ENCODE measurements at regions of chr1 and their contacts with region 1.

Region 1: GRCh38 chr1:156860113-156860627 is 495 bp upstream of the NTRK1 start:
- DNase-seq: peak; percentile 87
- H3K4me3 ChIP-seq: peak overlapping the region; percentile 54 to 64
- H3K27ac ChIP-seq: peak overlapping the region in 1 of 2 experiments; percentile 97; a peak in 2 of 4 replicates
- H3K4me1 ChIP-seq: peaks cover 3 to 74% of the 10 kb centered on the region in 2 experiments; a peak in 2 of 4 replicates
- H3K27me3 ChIP-seq: peaks cover 39% of the 10 kb centered on the region
- CTCF ChIP-seq: peak; percentile 85
- EP300 ChIP-seq: no peak
- RAD21 ChIP-seq: peak; percentile 86

Region 2: GRCh38 chr1:156728597-156729462 is 131.3 kb before region 1 on chr1 and contains the start of gene ISG20L2:
- CTCF ChIA-PET with region 1: interaction called, 104 read pairs
- POLR2A ChIA-PET with region 1: interaction called, 7 read pairs
- DNase-seq: peak; percentile 92
- H3K4me3 ChIP-seq: peak within 1 kb of the TSS; percentile 76 to 87
- H3K27ac ChIP-seq: peak within 1 kb of the TSS; percentile 83 to 88
- H3K4me1 ChIP-seq: peaks cover 28 to 56% of the 10 kb centered on the region in 2 experiments
- H3K27me3 ChIP-seq: no peaks in the 10 kb centered on the region
- CTCF ChIP-seq: no peak
- EP300 ChIP-seq: no peak
- RAD21 ChIP-seq: no peak
- polyA plus RNA-seq, gene ISG20L2: 31.6 and 44.3 TPM in 2 replicates

Region 3: DNA sequence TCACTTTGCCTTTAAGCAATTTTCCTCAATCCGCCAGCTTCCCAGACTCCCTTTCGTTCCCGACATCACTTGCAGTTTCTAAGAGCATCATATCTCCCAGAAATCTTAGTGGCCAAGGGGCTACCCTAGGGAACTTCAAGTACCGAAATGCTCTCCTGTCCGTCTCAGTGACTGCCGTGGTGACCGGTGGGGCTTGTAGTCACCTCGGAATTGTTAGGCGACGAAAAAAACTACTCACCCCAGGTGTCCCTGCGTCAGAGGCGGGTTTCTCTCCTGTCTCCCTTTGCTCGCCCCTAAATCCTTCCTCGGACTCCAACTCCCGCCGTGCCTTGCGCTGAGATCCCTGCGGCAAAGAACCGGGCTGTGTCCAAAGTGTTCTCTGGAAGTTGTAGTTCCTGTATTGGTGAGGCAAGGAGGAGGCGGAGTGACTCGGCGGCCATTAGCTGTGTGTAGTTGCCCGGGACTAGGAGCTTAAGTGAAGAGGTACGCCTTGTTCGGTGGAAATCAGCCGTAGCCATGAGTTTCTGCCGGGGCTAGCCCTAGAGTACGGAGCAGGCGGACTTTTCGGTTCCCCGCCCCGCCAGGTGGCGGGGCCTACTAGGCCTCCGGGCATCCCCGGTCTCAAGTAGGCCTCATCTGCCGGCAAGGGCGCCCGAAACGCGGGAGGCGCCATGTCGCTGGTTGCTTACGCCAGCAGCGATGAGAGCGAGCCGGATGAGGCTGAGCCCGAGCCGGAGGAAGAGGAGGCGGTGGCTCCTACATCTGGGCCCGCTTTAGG is 92.9 kb before region 1 on chr1 and contains the start of gene PRCC:
- CTCF ChIA-PET with region 1: interaction called, 64 read pairs
- POLR2A ChIA-PET with region 1: interaction called, 8 read pairs
- DNase-seq: peak; percentile 87
- H3K4me3 ChIP-seq: peak within 1 kb of the TSS; percentile 72 to 86
- H3K27ac ChIP-seq: peak within 1 kb of the TSS; percentile 77 to 90
- H3K4me1 ChIP-seq: peaks cover 23 to 26% of the 10 kb centered on the region in 2 experiments; a peak in 3 of 4 replicates
- H3K27me3 ChIP-seq: no peaks in the 10 kb centered on the region
- CTCF ChIP-seq: 0 out of 2 replicates have a peak, but pooled peaks have one; percentile 7
- EP300 ChIP-seq: peak; percentile 10 to 20; a peak in 2 of 4 replicates
- RAD21 ChIP-seq: peak; percentile 29; the same call in 1 of the 2 replicates
- polyA plus RNA-seq, gene PRCC: 39.2 and 51.8 TPM in 2 replicates

Region 4: GRCh38 chr1:156797212-156797871 is 62.8 kb before region 1 on chr1:
- CTCF ChIA-PET with region 1: interaction called, 566 read pairs
- POLR2A ChIA-PET with region 1: interaction called, 97 read pairs
- DNase-seq: peak; percentile 68
- H3K4me3 ChIP-seq: no peak overlapping the region; a peak in 1 of 4 replicates
- H3K27ac ChIP-seq: peak overlapping the region in 1 of 2 experiments; percentile 85; a peak in 2 of 4 replicates
- H3K4me1 ChIP-seq: peaks cover 20 to 59% of the 10 kb centered on the region in 2 experiments
- H3K27me3 ChIP-seq: no peaks in the 10 kb centered on the region
- CTCF ChIP-seq: peak; percentile 94
- EP300 ChIP-seq: peak in 1 of 2 experiments; percentile 83; a peak in 2 of 4 replicates
- RAD21 ChIP-seq: peak; percentile 90

Region 5: GRCh38 chr1:156845055-156845952 is 14.9 kb before region 1 on chr1:
- CTCF ChIA-PET with region 1: interaction called, 476 read pairs
- POLR2A ChIA-PET with region 1: interaction called, 38 read pairs
- DNase-seq: peak; percentile 68
- H3K4me3 ChIP-seq: no peak overlapping the region
- H3K27ac ChIP-seq: no peak overlapping the region
- H3K4me1 ChIP-seq: peaks cover 0 to 4% of the 10 kb centered on the region in 2 experiments; a peak in 1 of 4 replicates
- H3K27me3 ChIP-seq: no peaks in the 10 kb centered on the region
- CTCF ChIP-seq: no peak
- EP300 ChIP-seq: no peak
- RAD21 ChIP-seq: no peak

Region 6: GRCh38 chr1:156910309-156910782 is 50.2 kb after region 1 on chr1:
- CTCF ChIA-PET with region 1: interaction called, 22 read pairs
- POLR2A ChIA-PET with region 1: no interaction called
- DNase-seq: peak; percentile 88
- H3K4me3 ChIP-seq: no peak overlapping the region; a peak in 1 of 4 replicates
- H3K27ac ChIP-seq: no peak overlapping the region
- H3K4me1 ChIP-seq: peaks cover 11 to 39% of the 10 kb centered on the region in 2 experiments; a peak in 3 of 4 replicates
- H3K27me3 ChIP-seq: no peaks in the 10 kb centered on the region
- CTCF ChIP-seq: peak; percentile 80
- EP300 ChIP-seq: no peak
- RAD21 ChIP-seq: peak; percentile 40

Region 7: DNA sequence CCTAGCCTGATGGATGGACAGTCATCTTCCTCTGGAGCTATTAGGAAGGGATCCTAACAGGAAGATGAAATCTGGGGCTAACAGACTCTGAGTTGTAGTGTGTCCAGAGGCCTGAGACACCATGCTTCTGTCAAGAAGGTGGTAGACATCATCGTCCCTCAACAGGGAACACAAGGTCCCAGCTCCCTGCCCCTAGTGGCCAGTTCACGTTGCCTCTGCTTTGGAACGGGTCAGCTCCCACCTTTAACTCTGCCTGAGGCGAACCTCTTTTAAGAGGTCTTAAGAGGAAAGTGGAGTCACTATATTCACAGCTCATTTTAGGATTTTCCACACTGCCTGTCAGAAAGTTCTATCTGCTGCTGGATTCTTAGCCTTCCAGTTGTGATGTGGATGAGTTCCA is 88.5 kb after region 1 on chr1:
- CTCF ChIA-PET with region 1: no interaction called
- POLR2A ChIA-PET with region 1: no interaction called
- DNase-seq: no peak
- H3K4me3 ChIP-seq: no peak overlapping the region
- H3K27ac ChIP-seq: no peak overlapping the region
- H3K4me1 ChIP-seq: no peaks in the 10 kb centered on the region
- H3K27me3 ChIP-seq: no peaks in the 10 kb centered on the region
- CTCF ChIP-seq: peak; percentile 34; the same call in 1 of the 2 replicates
- EP300 ChIP-seq: no peak
- RAD21 ChIP-seq: no peak

Measured in SK-N-SH (cell line).